ENCODE measurements at regions of chr20 and their contacts with region 1.

Region 1: GRCh38 chr20:3820048-3820900 is at the start of gene AP5S1:
- DNase-seq: peak; percentile 98
- H3K4me3 ChIP-seq: peak within 1 kb of the TSS; percentile 60 to 76
- H3K27ac ChIP-seq: peak within 1 kb of the TSS; percentile 94 to 95
- H3K4me1 ChIP-seq: peaks cover 0 to 17% (median 13%) of the 10 kb centered on the region in 4 donors
- H3K27me3 ChIP-seq: no peaks in the 10 kb centered on the region
- CTCF ChIP-seq: peak; percentile 99 to 100

Region 2: DNA sequence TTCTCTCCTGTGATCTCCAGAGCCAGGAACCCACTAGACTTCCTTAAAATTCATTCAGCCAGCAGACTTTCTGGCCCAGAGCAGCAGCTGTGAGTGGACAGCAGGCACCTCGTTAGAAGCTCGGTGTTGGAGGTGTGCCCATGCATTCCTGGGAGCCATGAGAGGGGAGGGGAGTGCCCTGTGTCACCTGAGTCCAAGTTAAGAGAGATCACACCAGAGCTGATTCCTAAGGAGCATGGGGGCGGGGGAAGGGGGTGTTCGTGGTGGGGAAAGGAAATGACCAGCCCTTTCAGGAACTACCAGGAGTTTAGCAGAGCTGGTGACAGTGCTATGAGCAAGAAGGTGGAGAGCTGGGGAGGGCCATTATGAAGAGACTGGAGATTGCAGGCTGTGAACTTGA is 204.0 kb before region 1 on chr20:
- intact Hi-C with region 1: no loop called
- DNase-seq: no peak
- H3K4me3 ChIP-seq: no peak overlapping the region
- H3K27ac ChIP-seq: no peak overlapping the region
- H3K4me1 ChIP-seq: no peaks in the 10 kb centered on the region
- H3K27me3 ChIP-seq: no peaks in the 10 kb centered on the region
- CTCF ChIP-seq: no peak

Region 3: GRCh38 chr20:3652676-3653596 is 167.3 kb before region 1 on chr20:
- intact Hi-C with region 1: no loop called
- DNase-seq: no peak
- H3K4me3 ChIP-seq: no peak overlapping the region
- H3K27ac ChIP-seq: no peak overlapping the region
- H3K4me1 ChIP-seq: no peaks in the 10 kb centered on the region
- H3K27me3 ChIP-seq: no peaks in the 10 kb centered on the region
- CTCF ChIP-seq: no peak

Region 4: DNA sequence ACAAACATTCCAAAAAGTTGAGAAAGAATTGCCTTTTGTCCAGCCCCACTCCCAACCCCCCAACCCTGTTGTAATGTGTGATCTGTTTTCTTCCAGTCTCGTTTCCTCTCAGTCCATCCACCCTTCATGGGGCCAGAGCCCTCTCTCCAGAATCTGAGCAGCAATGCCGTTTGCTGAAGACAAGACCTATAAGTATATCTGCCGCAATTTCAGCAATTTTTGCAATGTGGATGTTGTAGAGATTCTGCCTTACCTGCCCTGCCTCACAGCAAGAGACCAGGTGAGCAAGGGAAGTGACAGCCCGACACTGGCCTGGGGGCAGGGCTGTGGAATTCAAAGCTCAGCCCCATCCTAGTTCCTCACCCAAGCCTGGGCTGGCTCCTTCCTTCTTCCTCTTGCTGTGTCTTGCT is 34.2 kb after region 1 on chr20:
- intact Hi-C with region 1: loop called (anchors 5 kb)
- DNase-seq: no peak
- H3K4me3 ChIP-seq: no peak overlapping the region
- H3K27ac ChIP-seq: no peak overlapping the region
- H3K4me1 ChIP-seq: peaks cover 0 to 7% (median under 1%) of the 10 kb centered on the region in 4 donors
- H3K27me3 ChIP-seq: no peaks in the 10 kb centered on the region
- CTCF ChIP-seq: no peak